Activated naive CD4-positive, alpha-beta T cell treated with anti-CD3 and anti-CD28 coated beads for 36 hours (primary cell): ENCODE measurements at regions of chr1 and their contacts with region 1.

Region 1: DNA sequence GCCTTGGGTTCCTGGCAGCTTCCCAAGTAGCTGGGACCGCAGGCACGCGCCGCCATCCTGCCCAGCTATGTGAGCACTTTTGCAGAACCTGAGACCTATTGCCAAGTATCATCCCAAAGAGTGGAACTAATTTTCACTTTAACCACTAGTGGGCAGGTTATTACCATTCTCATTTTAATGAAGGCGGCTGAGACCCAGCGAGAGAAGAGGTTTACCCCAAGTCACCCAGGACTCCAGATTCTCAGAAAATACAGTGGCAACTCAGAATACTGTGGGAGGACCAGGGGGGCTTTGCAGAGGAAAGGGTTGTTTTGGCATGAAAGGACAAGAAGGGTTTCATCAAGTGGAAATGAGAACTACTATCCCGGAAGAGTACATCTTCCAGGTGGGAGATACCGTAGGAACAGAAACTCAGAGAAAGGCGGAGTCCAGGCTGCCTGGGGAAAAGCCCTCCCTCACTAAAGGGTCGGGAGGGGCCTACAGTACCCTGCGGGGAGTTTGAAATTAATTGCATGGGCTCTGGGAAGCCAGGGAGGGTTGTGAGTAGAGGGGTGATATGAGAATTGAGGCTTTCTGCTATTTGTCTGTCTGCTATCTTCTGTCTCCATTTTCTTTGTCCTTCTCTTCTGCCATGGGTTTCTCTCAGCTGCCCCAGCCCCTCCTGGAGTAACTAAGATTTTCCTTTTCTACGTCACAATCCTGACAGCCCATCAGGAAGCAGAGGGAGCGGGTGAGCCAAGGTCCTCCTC is 7.2 kb upstream of the SEMA4A start:
- DNase-seq: peak; percentile 63
- H3K4me3 Mint-ChIP-seq: peak overlapping the region; percentile 67
- H3K27ac Mint-ChIP-seq: peak overlapping the region; percentile 85
- H3K4me1 Mint-ChIP-seq: peaks cover 49% of the 10 kb centered on the region
- H3K27me3 Mint-ChIP-seq: no peaks in the 10 kb centered on the region

Region 2: DNA sequence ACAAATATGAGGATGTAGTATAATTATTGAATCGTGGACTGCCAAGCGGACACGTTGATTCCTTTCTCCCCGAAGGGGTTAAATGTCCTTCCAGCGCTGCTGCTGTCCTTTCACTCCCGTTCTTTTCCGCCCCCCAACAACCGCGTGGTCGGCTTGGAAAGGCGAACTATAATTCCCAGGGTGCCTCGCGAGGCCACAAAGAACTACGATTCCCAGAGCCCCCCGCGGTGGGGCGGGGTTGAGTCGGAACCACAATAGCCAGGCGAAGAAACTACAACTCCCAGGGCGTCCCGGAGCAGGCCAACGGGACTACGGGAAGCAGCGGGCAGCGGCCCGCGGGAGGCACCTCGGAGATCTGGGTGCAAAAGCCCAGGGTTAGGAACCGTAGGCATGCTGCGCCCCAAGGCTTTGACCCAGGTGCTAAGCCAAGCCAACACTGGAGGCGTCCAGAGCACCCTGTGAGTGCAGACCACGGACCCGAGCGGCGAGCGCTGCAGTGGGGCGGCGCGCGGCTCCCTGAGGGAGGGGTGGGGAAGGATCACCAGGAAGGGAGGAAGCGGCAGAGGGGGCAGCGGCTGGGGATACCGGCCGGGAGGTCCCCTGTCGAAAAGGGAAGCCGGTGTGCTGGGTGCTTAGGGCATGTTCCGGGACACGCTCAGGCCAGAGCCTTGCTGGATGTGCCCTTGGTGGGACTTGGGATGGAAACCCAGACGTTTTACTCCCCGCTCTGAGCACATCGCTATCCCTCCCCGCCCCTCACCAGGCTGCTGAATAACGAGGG is 91.5 kb before region 1 on chr1 and contains the start of gene LAMTOR2:
- CTCF ChIA-PET with region 1: no interaction called
- intact Hi-C with region 1: no loop called
- DNase-seq: peak; percentile 98
- H3K4me3 Mint-ChIP-seq: peak within 1 kb of the TSS; percentile 92
- H3K27ac Mint-ChIP-seq: peak within 1 kb of the TSS; percentile 93
- H3K4me1 Mint-ChIP-seq: peaks cover 24% of the 10 kb centered on the region
- H3K27me3 Mint-ChIP-seq: no peaks in the 10 kb centered on the region
- total RNA-seq, gene LAMTOR2: 54.9 to 55.9 TPM

Region 3: DNA sequence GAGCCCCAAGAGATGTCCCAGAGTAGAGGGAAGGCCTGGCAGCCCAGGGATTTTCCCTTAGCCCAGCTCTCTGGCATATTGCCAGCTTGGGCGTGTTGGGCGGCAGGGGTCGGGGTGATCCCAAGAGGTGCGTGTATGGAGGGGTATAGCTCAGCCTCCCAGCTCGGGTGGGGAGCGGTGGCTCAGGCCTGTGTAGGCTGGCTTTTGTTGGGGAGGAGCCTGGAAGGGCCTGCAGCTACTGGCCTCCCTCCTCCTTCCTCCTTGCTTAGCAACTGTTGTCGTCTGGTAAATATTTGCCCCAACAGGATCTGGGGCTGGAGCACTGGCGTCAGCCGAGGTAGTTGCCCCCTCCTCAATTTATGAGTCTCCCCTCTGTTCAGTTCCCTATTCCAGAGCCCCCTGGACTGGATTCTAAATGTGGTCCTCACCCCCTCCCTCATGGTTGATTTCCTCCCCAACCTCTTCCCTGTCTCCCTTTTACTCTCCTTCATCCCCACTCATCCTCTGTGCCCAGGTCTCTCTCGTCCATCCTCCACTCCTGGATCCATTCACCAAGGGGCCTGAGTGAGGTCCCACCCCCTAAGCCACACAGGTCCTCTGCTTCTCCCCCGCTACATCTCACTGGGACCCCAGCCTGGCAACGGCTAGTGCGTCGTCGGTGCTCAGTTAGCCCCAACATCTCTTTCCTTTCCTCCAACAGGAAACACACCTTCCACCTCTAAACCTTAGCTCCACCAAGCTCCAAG is 42.0 kb before region 1 on chr1:
- CTCF ChIA-PET with region 1: no interaction called
- intact Hi-C with region 1: loop called (anchors 1 kb)
- DNase-seq: peak; percentile 48
- H3K4me3 Mint-ChIP-seq: no peak overlapping the region
- H3K27ac Mint-ChIP-seq: peak overlapping the region; percentile 63
- H3K4me1 Mint-ChIP-seq: peaks cover 61% of the 10 kb centered on the region
- H3K27me3 Mint-ChIP-seq: peaks cover 16% of the 10 kb centered on the region

Region 4: GRCh38 chr1:156193488-156194299 is 47.5 kb after region 1 on chr1 and contains the start of gene SLC25A44:
- CTCF ChIA-PET with region 1: interaction called, 4 read pairs
- intact Hi-C with region 1: loop called (anchors 1 kb)
- DNase-seq: peak; percentile 98
- H3K4me3 Mint-ChIP-seq: peak within 1 kb of the TSS; percentile 79
- H3K27ac Mint-ChIP-seq: peak within 1 kb of the TSS; percentile 74
- H3K4me1 Mint-ChIP-seq: peaks cover 59% of the 10 kb centered on the region
- H3K27me3 Mint-ChIP-seq: no peaks in the 10 kb centered on the region
- total RNA-seq, gene SLC25A44: 69.1 to 73.5 TPM

Region 5: DNA sequence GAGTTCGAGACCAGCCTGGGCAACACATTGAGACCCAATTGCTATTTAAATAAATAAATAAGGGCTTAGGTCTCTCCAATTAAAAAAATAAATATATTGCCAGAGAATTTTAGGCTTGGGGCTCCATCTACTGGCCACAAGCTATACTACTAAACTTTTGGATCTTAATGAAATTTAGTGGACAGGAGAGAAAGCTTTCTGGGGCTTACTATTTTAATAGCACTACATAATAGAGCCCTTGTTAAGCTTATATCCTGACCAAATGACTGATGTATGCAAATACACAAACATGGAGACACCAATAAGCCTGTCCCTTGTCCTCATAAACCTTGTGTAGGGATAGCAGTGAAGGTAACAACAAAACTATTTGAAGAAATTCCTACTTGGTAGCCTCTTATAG is 173.5 kb after region 1 on chr1:
- CTCF ChIA-PET with region 1: interaction called, 10 read pairs
- intact Hi-C with region 1: loop called (anchors 1 kb)
- DNase-seq: peak; percentile 38
- H3K4me3 Mint-ChIP-seq: no peak overlapping the region
- H3K27ac Mint-ChIP-seq: no peak overlapping the region
- H3K4me1 Mint-ChIP-seq: no peaks in the 10 kb centered on the region
- H3K27me3 Mint-ChIP-seq: no peaks in the 10 kb centered on the region